B cell (primary cell): ENCODE measurements at regions of chr9 and their contacts with region 1.

Region 1: GRCh38 chr9:99819856-99820684 is 1.6 kb upstream of the NR4A3 start:
- DNase-seq: peak; percentile 98
- ATAC-seq: peak; percentile 54
- H3K4me3 ChIP-seq: peak overlapping the region; percentile 73 to 100 (median 80)
- H3K4me3 Mint-ChIP-seq: peak overlapping the region; percentile 100
- H3K27ac ChIP-seq: peak overlapping the region; percentile 94 to 98
- H3K27ac Mint-ChIP-seq: peak overlapping the region; percentile 98
- H3K4me1 ChIP-seq: peaks cover 41 to 49% of the 10 kb centered on the region in 2 donors
- H3K4me1 Mint-ChIP-seq: peaks cover 47% of the 10 kb centered on the region
- H3K27me3 ChIP-seq: peaks cover 0 to 33% (median 18%) of the 10 kb centered on the region in 4 experiments
- H3K27me3 Mint-ChIP-seq: peaks cover 10% of the 10 kb centered on the region
- CTCF ChIP-seq: no peak

Region 2: GRCh38 chr9:99057665-99058625 is 762.1 kb before region 1 on chr9:
- CTCF ChIA-PET with region 1: no interaction called
- POLR2A ChIA-PET with region 1: no interaction called
- intact Hi-C with region 1: loop called (anchors 5 kb)
- DNase-seq: peak; percentile 72
- ATAC-seq: peak; percentile 52
- H3K4me3 ChIP-seq: peak overlapping the region; percentile 13 to 55 (median 23)
- H3K4me3 Mint-ChIP-seq: peak overlapping the region; percentile 86
- H3K27ac ChIP-seq: peak overlapping the region; percentile 57 to 75
- H3K27ac Mint-ChIP-seq: peak overlapping the region; percentile 88
- H3K4me1 ChIP-seq: peaks cover 54 to 66% of the 10 kb centered on the region in 2 donors
- H3K4me1 Mint-ChIP-seq: peaks cover 64% of the 10 kb centered on the region
- H3K27me3 ChIP-seq: no peaks in the 10 kb centered on the region
- H3K27me3 Mint-ChIP-seq: no peaks in the 10 kb centered on the region
- CTCF ChIP-seq: no peak

Region 3: DNA sequence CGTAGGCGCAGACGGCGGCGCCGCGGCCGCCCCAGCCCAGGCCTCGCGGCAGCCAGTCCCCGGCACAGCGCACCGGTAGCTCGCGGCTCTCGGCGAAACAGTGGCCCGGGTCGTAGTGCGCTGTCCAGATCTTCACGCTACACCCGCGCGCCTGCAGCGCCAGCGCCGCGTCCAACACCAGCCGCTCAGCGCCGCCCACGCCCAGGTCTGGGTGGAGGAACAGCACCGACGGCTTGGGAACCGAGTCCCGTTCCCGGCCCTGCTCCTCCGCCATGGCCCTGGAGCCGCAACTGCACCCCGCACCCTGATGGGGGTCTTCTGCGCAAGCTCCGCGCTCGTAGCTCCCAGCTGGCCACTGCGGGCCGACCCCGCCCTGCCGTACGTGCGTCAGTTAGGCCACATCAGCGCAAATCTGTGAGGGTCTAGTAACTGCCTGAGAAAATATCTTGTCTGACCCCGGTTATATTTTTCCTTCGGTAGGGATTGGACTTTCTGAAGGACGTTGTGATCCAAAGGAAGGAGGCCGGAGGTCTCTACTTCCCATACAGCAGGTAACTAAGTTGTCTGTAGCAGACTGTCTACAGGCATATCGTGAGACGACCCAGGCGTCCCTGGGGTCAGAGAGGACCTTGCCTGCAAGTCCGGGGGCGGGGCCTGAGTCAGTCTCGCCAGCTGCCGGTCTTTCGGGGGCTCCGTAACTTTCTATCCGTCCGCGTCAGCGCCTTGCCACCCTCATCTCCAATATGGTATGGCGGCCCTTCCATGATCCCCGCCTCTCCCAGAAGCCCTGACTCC is 598.3 kb before region 1 on chr9 and contains the starts of genes ALG2 and SEC61B:
- CTCF ChIA-PET with region 1: interaction called, 7 read pairs
- POLR2A ChIA-PET with region 1: interaction called, 3 read pairs
- intact Hi-C with region 1: loop called (anchors 1 kb)
- DNase-seq: peak; percentile 98
- ATAC-seq: peak; percentile 89
- H3K4me3 ChIP-seq: peak within 1 kb of the TSS; percentile 88 to 96 (median 90)
- H3K4me3 Mint-ChIP-seq: peak within 1 kb of the TSS; percentile 95
- H3K27ac ChIP-seq: peak within 1 kb of the TSS; percentile 98 to 99
- H3K27ac Mint-ChIP-seq: peak within 1 kb of the TSS; percentile 100
- H3K4me1 ChIP-seq: peaks cover 30 to 43% of the 10 kb centered on the region in 2 donors
- H3K4me1 Mint-ChIP-seq: peaks cover 77% of the 10 kb centered on the region
- H3K27me3 ChIP-seq: no peaks in the 10 kb centered on the region
- H3K27me3 Mint-ChIP-seq: no peaks in the 10 kb centered on the region
- CTCF ChIP-seq: no peak
- total RNA-seq, gene ALG2: 42.6 and 46.3 TPM in 2 replicates
- total RNA-seq, gene SEC61B: 70.2 and 78.2 TPM in 2 replicates

Region 4: GRCh38 chr9:99595796-99596195 is 224.3 kb before region 1 on chr9:
- CTCF ChIA-PET with region 1: no interaction called
- POLR2A ChIA-PET with region 1: no interaction called
- intact Hi-C with region 1: loop called (anchors 10 kb)
- DNase-seq: peak; percentile 85
- ATAC-seq: peak; percentile 68
- H3K4me3 ChIP-seq: no peak overlapping the region
- H3K4me3 Mint-ChIP-seq: peak overlapping the region; percentile 53
- H3K27ac ChIP-seq: peak overlapping the region in 1 of 2 donors; percentile 38
- H3K27ac Mint-ChIP-seq: peak overlapping the region; percentile 84
- H3K4me1 ChIP-seq: peaks cover 29% of the 10 kb centered on the region in 2 donors
- H3K4me1 Mint-ChIP-seq: peaks cover 52% of the 10 kb centered on the region
- H3K27me3 ChIP-seq: no peaks in the 10 kb centered on the region
- H3K27me3 Mint-ChIP-seq: no peaks in the 10 kb centered on the region
- CTCF ChIP-seq: no peak

Region 5: DNA sequence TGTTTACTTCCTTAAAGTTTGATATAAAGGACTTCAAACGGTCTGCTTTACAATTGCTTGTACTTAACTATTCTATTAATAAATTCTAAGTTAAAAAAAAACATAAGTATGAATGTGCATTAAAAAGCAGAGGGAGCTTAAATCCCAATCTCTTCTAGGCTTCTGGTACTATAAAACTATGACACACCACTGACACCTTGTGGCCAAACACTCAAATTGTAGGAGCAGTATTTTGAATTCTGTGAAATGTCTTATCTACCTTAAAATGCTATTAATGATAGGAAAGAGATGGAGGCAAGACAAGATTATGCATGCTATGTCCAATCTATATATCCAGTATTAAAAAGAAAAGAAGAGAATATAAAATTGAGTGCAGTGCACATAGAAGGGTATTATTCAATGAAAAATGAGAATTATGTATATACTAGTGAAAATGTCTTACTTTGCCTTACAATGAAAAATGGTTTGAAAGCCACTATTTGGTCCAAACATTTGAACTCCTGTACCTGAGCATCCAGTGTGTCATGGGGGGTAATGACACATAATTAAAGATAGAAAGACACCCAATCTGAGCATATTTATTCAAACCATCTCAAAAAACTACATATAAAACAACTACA is 191.1 kb after region 1 on chr9:
- CTCF ChIA-PET with region 1: interaction called, 9 read pairs
- POLR2A ChIA-PET with region 1: no interaction called
- intact Hi-C with region 1: loop called (anchors 2 kb)
- DNase-seq: peak; percentile 66
- ATAC-seq: no peak
- H3K4me3 ChIP-seq: no peak overlapping the region
- H3K4me3 Mint-ChIP-seq: no peak overlapping the region
- H3K27ac ChIP-seq: no peak overlapping the region
- H3K27ac Mint-ChIP-seq: no peak overlapping the region
- H3K4me1 ChIP-seq: no peaks in the 10 kb centered on the region
- H3K4me1 Mint-ChIP-seq: no peaks in the 10 kb centered on the region
- H3K27me3 ChIP-seq: no peaks in the 10 kb centered on the region
- H3K27me3 Mint-ChIP-seq: no peaks in the 10 kb centered on the region
- CTCF ChIP-seq: peak; percentile 82

Region 6: GRCh38 chr9:100216178-100216787 is 396.2 kb after region 1 on chr9:
- CTCF ChIA-PET with region 1: interaction called, 4 read pairs
- POLR2A ChIA-PET with region 1: no interaction called
- intact Hi-C with region 1: loop called (anchors 10 kb)
- DNase-seq: peak; percentile 81
- ATAC-seq: peak; percentile 85
- H3K4me3 ChIP-seq: no peak overlapping the region
- H3K4me3 Mint-ChIP-seq: no peak overlapping the region
- H3K27ac ChIP-seq: no peak overlapping the region
- H3K27ac Mint-ChIP-seq: no peak overlapping the region
- H3K4me1 ChIP-seq: no peaks in the 10 kb centered on the region
- H3K4me1 Mint-ChIP-seq: no peaks in the 10 kb centered on the region
- H3K27me3 ChIP-seq: no peaks in the 10 kb centered on the region
- H3K27me3 Mint-ChIP-seq: no peaks in the 10 kb centered on the region
- CTCF ChIP-seq: peak; percentile 79